GM12878 (cell line): ENCODE measurements at regions of chr13 and their contacts with region 1.

Region 1: GRCh38 chr13:29362849-29363604 is 232.5 kb downstream of the SLC7A1 start:
- DNase-seq: peak; percentile 13
- ATAC-seq: peak; percentile 98
- H3K4me3 ChIP-seq: no peak overlapping the region
- H3K27ac ChIP-seq: no peak overlapping the region
- H3K4me1 ChIP-seq: no peaks in the 10 kb centered on the region; the same call in 1 of the 2 replicates
- H3K27me3 ChIP-seq: no peaks in the 10 kb centered on the region
- CTCF ChIP-seq: peak; percentile 90 to 99 (median 99)
- EP300 ChIP-seq: no peak
- POLR2A ChIP-seq: no peak
- RAD21 ChIP-seq: peak; percentile 90

Region 2: GRCh38 chr13:28324181-28324789 is 1038.7 kb before region 1 on chr13:
- CTCF ChIA-PET with region 1: no interaction called
- POLR2A ChIA-PET with region 1: no interaction called
- RAD21 ChIA-PET with region 1: no interaction called
- SMC1A ChIA-PET with region 1: no interaction called
- in situ Hi-C with region 1: loop called (anchors 25 kb)
- intact Hi-C with region 1: no loop called
- DNase-seq: peak; percentile 45
- ATAC-seq: peak; percentile 96
- H3K4me3 ChIP-seq: no peak overlapping the region
- H3K27ac ChIP-seq: no peak overlapping the region
- H3K4me1 ChIP-seq: no peaks in the 10 kb centered on the region
- H3K27me3 ChIP-seq: no peaks in the 10 kb centered on the region
- CTCF ChIP-seq: peak; percentile 77 to 91 (median 85)
- EP300 ChIP-seq: no peak
- POLR2A ChIP-seq: no peak
- RAD21 ChIP-seq: peak; percentile 97

Region 3: GRCh38 chr13:28805193-28805819 is 557.7 kb before region 1 on chr13:
- CTCF ChIA-PET with region 1: interaction called, 3 read pairs
- POLR2A ChIA-PET with region 1: no interaction called
- RAD21 ChIA-PET with region 1: no interaction called
- SMC1A ChIA-PET with region 1: no interaction called
- in situ Hi-C with region 1: no loop called
- intact Hi-C with region 1: loop called (anchors 5 kb)
- DNase-seq: no peak
- ATAC-seq: peak; percentile 52; the same call in 2 of the 3 replicates
- H3K4me3 ChIP-seq: no peak overlapping the region
- H3K27ac ChIP-seq: no peak overlapping the region
- H3K4me1 ChIP-seq: no peaks in the 10 kb centered on the region
- H3K27me3 ChIP-seq: no peaks in the 10 kb centered on the region; a peak in 1 of 4 replicates
- CTCF ChIP-seq: peak; percentile 13 to 39 (median 39); a peak in 5 of 6 replicates
- EP300 ChIP-seq: no peak
- POLR2A ChIP-seq: no peak
- RAD21 ChIP-seq: 0 out of 2 replicates have a peak, but pooled peaks have one; percentile 20

Region 4: GRCh38 chr13:28967029-28967915 is 395.8 kb before region 1 on chr13:
- CTCF ChIA-PET with region 1: no interaction called
- POLR2A ChIA-PET with region 1: no interaction called
- RAD21 ChIA-PET with region 1: no interaction called
- SMC1A ChIA-PET with region 1: no interaction called
- in situ Hi-C with region 1: no loop called
- intact Hi-C with region 1: loop called (anchors 10 kb)
- DNase-seq: no peak
- ATAC-seq: no peak
- H3K4me3 ChIP-seq: no peak overlapping the region
- H3K27ac ChIP-seq: no peak overlapping the region
- H3K4me1 ChIP-seq: no peaks in the 10 kb centered on the region
- H3K27me3 ChIP-seq: no peaks in the 10 kb centered on the region; a peak in 1 of 4 replicates
- CTCF ChIP-seq: no peak
- EP300 ChIP-seq: no peak
- POLR2A ChIP-seq: no peak
- RAD21 ChIP-seq: no peak

Region 5: DNA sequence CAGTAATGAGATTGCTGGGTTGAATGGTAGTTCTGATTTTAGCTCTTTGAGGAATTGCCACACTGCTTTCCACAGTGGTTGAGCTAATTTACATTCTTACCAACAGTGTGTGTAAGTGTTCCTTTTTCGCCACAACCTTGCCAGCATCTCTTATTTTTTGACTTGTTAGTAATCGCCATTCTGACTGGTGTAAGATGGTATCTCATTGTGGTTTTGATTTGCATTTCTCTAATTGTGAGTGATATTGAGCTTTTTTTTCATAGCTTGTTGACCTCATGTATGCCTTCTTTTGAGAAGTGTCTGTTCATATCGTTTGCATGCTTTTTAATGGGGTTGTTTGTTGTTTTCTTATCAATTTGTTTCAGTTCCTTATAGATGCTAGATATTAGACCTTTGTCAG is 297.9 kb before region 1 on chr13:
- CTCF ChIA-PET with region 1: no interaction called
- POLR2A ChIA-PET with region 1: no interaction called
- RAD21 ChIA-PET with region 1: no interaction called
- SMC1A ChIA-PET with region 1: no interaction called
- in situ Hi-C with region 1: no loop called
- intact Hi-C with region 1: no loop called
- DNase-seq: peak; percentile 27
- ATAC-seq: no peak
- H3K4me3 ChIP-seq: no peak overlapping the region
- H3K27ac ChIP-seq: no peak overlapping the region
- H3K4me1 ChIP-seq: no peaks in the 10 kb centered on the region
- H3K27me3 ChIP-seq: no peaks in the 10 kb centered on the region
- CTCF ChIP-seq: no peak
- EP300 ChIP-seq: no peak
- POLR2A ChIP-seq: no peak
- RAD21 ChIP-seq: no peak

Region 6: DNA sequence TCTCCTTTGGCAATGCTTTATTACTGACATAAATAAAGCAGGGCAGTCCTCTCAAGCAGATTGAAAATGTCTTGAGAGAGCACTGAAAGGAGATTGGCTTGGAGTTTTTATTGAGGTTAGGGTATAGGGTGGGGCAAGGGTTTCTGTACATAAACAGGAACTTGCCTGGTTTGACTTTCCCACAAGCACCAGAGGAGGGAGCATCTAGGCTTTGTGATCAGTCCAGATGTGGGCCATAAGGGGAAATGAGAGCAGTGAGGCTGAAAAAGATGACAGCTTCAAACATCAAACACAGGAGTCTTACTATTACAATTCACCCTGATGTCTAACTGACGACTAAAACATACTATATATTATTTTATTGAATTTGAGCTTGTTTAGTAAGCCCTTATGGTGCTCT is 282.0 kb before region 1 on chr13:
- CTCF ChIA-PET with region 1: interaction called, 3 read pairs
- POLR2A ChIA-PET with region 1: no interaction called
- RAD21 ChIA-PET with region 1: no interaction called
- SMC1A ChIA-PET with region 1: no interaction called
- in situ Hi-C with region 1: no loop called
- intact Hi-C with region 1: loop called (anchors 2 kb)
- DNase-seq: peak; percentile 48
- ATAC-seq: peak; percentile 32; the same call in 2 of the 3 replicates
- H3K4me3 ChIP-seq: no peak overlapping the region
- H3K27ac ChIP-seq: no peak overlapping the region
- H3K4me1 ChIP-seq: no peaks in the 10 kb centered on the region
- H3K27me3 ChIP-seq: no peaks in the 10 kb centered on the region
- CTCF ChIP-seq: peak; percentile 28 to 49 (median 34); a peak in 5 of 6 replicates
- EP300 ChIP-seq: no peak
- POLR2A ChIP-seq: no peak
- RAD21 ChIP-seq: peak; percentile 95

Region 7: GRCh38 chr13:29165840-29166239 is 197.2 kb before region 1 on chr13:
- CTCF ChIA-PET with region 1: no interaction called
- POLR2A ChIA-PET with region 1: no interaction called
- RAD21 ChIA-PET with region 1: no interaction called
- SMC1A ChIA-PET with region 1: no interaction called
- in situ Hi-C with region 1: no loop called
- intact Hi-C with region 1: no loop called
- DNase-seq: no peak
- ATAC-seq: no peak
- H3K4me3 ChIP-seq: no peak overlapping the region
- H3K27ac ChIP-seq: no peak overlapping the region
- H3K4me1 ChIP-seq: no peaks in the 10 kb centered on the region
- H3K27me3 ChIP-seq: no peaks in the 10 kb centered on the region
- CTCF ChIP-seq: no peak
- EP300 ChIP-seq: no peak
- POLR2A ChIP-seq: no peak
- RAD21 ChIP-seq: no peak